A673 (cell line): ENCODE measurements at regions of chr4 and their contacts with region 1.

Region 1: GRCh38 chr4:175253184-175253902 is 335.2 kb downstream of the ADAM29 start:
- DNase-seq: peak; percentile 21
- H3K4me3 ChIP-seq: no peak overlapping the region
- H3K27ac ChIP-seq: no peak overlapping the region
- H3K4me1 ChIP-seq: no peaks in the 10 kb centered on the region
- H3K27me3 ChIP-seq: no peaks in the 10 kb centered on the region
- CTCF ChIP-seq: peak; percentile 59

Region 2: DNA sequence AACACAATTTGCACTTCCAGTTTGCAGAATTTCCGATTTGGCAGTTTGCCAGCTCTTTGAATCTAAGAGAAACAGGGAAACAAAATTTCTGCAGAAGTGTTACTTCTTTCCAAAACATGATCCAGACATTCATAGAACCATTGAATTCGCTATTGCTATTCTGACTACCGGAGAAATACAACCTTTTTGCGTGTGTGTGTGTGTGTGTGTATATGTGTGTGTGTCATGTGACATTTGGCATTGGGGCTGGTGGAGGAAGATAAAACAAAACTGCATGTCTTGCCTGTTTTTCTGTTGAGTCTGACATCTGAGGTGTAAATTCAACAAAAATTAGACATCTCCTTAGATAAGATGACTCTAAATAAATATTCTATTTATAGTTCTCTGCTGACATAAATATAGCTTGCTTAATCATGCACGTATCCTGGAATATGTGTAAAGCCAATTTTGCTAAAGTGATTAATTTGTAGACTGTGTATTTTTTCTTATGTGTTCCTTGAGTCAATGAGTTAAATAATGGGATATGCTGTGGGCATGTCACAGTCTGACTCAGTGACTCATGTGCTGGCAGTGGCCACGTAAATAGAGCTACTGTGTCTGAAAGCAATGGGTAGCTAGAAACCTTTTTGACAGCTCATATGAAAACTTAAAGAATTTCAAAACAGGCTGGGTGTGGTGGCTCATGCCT is 829.9 kb before region 1 on chr4:
- CTCF ChIA-PET with region 1: no interaction called
- POLR2A ChIA-PET with region 1: no interaction called
- intact Hi-C with region 1: no loop called
- DNase-seq: peak; percentile 58
- H3K4me3 ChIP-seq: no peak overlapping the region
- H3K27ac ChIP-seq: no peak overlapping the region
- H3K4me1 ChIP-seq: peaks cover 12% of the 10 kb centered on the region
- H3K27me3 ChIP-seq: no peaks in the 10 kb centered on the region
- CTCF ChIP-seq: no peak

Region 3: GRCh38 chr4:174764105-174764729 is 489.1 kb before region 1 on chr4:
- CTCF ChIA-PET with region 1: interaction called, 6 read pairs
- POLR2A ChIA-PET with region 1: no interaction called
- intact Hi-C with region 1: loop called (anchors 2 kb)
- DNase-seq: peak; percentile 61
- H3K4me3 ChIP-seq: no peak overlapping the region
- H3K27ac ChIP-seq: no peak overlapping the region
- H3K4me1 ChIP-seq: no peaks in the 10 kb centered on the region
- H3K27me3 ChIP-seq: no peaks in the 10 kb centered on the region
- CTCF ChIP-seq: peak; percentile 82

Region 4: DNA sequence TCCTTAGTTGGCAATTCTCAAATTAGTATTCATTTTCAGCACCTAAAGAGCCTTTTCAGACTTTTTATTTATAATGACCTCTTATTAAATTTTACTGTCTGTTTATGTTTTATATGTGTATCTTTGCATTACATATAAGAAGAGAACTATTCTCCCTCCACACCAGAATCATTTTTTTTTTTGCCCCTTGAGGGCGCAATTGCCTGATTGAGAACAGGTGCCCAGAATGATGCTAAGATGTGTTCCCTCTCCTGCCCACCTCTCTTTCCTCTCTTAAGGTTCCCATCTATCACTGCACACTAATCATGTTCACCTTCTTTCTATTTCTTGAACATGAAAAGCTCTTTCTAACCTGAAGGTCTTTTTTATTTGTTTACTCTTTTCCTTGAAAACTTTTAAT is 379.4 kb before region 1 on chr4:
- CTCF ChIA-PET with region 1: interaction called, 3 read pairs
- POLR2A ChIA-PET with region 1: no interaction called
- intact Hi-C with region 1: loop called (anchors 5 kb)
- DNase-seq: peak; percentile 11
- H3K4me3 ChIP-seq: no peak overlapping the region
- H3K27ac ChIP-seq: no peak overlapping the region
- H3K4me1 ChIP-seq: no peaks in the 10 kb centered on the region
- H3K27me3 ChIP-seq: no peaks in the 10 kb centered on the region
- CTCF ChIP-seq: peak; percentile 49

Region 5: GRCh38 chr4:175271010-175271630 is 17.8 kb after region 1 on chr4:
- CTCF ChIA-PET with region 1: no interaction called
- POLR2A ChIA-PET with region 1: no interaction called
- intact Hi-C with region 1: no loop called
- DNase-seq: no peak
- H3K4me3 ChIP-seq: no peak overlapping the region
- H3K27ac ChIP-seq: no peak overlapping the region
- H3K4me1 ChIP-seq: no peaks in the 10 kb centered on the region
- H3K27me3 ChIP-seq: no peaks in the 10 kb centered on the region
- CTCF ChIP-seq: no peak